ENCODE measurements at regions of chr12 and their contacts with region 1.

Region 1: DNA sequence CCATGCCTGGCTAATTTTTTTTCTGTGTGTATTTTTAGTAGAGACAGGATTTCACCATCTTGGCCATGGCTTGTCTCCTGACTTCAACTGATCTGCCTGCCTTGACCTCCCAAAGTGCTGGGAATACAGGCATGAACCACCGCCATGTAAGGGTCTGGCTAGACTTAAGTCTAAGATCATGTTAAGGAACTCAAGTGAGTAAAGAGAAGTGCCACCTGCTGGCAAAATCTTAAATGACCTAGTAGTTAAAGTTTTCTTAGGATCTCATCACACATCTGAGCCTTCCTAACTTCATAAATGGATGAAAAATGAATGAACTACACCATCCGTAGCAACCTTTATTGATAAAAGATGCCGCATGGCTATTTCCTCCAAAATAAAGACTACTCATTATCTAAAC is 1.7 kb upstream of the C12orf56 start:
- DNase-seq: no peak
- ATAC-seq: peak; percentile 40; the same call in 1 of the 3 replicates
- H3K4me3 ChIP-seq: no peak overlapping the region
- H3K27ac ChIP-seq: no peak overlapping the region
- H3K4me1 ChIP-seq: peaks cover 11% of the 10 kb centered on the region; the same call in 1 of the 2 replicates
- H3K27me3 ChIP-seq: peaks cover 0 to 18% of the 10 kb centered on the region in 2 experiments; a peak in 3 of 5 replicates
- CTCF ChIP-seq: peak; percentile 42; the same call in 1 of the 2 replicates
- EP300 ChIP-seq: no peak
- POLR2A ChIP-seq: no peak
- RAD21 ChIP-seq: no peak

Region 2: DNA sequence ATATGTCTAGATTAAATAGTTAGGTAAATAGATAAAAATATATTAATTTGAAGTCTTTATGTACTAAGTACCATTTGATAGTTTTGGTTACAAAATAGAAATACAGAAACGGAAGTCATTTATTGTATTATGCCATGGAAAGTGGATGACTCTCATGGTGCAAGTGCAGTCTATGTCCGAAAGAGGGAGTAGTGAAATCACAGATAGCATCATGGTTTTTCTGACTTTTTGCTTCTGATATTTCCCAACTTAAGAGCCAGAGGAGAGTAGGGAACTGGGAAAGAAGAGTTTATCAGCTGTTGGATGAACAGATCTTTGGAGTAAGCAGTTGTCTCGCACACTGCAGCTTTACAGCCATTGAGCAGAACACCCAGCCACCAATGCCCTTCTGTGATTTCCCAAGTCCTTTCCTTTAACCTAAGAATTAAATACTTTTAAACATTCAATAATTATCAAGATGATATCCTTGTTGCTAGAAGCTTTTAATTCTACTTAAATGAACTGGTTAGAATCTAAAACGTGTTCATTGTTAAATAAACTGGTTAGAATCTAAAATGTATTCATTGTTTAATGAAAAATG is 566.1 kb before region 1 on chr12:
- CTCF ChIA-PET with region 1: interaction called, 11 read pairs
- POLR2A ChIA-PET with region 1: no interaction called
- in situ Hi-C with region 1: loop called (anchors 5 kb)
- intact Hi-C with region 1: loop called (anchors 1 kb)
- DNase-seq: peak; percentile 56
- ATAC-seq: peak; percentile 79
- H3K4me3 ChIP-seq: no peak overlapping the region
- H3K27ac ChIP-seq: no peak overlapping the region
- H3K4me1 ChIP-seq: peaks cover 18% of the 10 kb centered on the region
- H3K27me3 ChIP-seq: no peaks in the 10 kb centered on the region
- CTCF ChIP-seq: peak; percentile 82
- EP300 ChIP-seq: no peak
- POLR2A ChIP-seq: no peak
- RAD21 ChIP-seq: peak; percentile 57; the same call in 1 of the 2 replicates

Region 3: GRCh38 chr12:64273527-64274403 is 118.5 kb before region 1 on chr12:
- CTCF ChIA-PET with region 1: no interaction called
- POLR2A ChIA-PET with region 1: no interaction called
- in situ Hi-C with region 1: loop called (anchors 10 kb)
- intact Hi-C with region 1: loop called (anchors 1 kb)
- DNase-seq: peak; percentile 6
- ATAC-seq: peak; percentile 91
- H3K4me3 ChIP-seq: no peak overlapping the region
- H3K27ac ChIP-seq: no peak overlapping the region
- H3K4me1 ChIP-seq: no peaks in the 10 kb centered on the region
- H3K27me3 ChIP-seq: peaks cover 0 to 5% of the 10 kb centered on the region in 2 experiments; a peak in 2 of 5 replicates
- CTCF ChIP-seq: peak; percentile 63
- EP300 ChIP-seq: no peak
- POLR2A ChIP-seq: no peak
- RAD21 ChIP-seq: peak; percentile 34; the same call in 1 of the 2 replicates

Region 4: DNA sequence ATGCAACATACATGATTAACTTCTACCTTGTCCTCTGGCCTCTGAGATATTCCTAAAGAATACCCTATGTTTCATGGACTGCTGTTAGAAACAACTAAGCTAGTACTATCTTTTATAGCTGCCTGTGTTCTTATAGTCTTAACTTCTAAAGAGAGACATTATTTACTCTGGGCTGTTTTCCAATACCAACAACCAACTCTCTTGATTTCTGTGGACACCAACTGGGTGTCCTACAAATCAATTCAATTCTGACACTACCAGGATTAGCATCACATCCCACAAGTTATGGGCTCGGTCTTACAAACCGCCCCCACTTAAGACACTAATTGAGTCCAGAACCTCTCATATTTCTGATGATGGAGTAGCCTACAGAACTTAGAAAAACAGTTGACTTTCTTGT is 20.2 kb after region 1 on chr12:
- CTCF ChIA-PET with region 1: no interaction called
- POLR2A ChIA-PET with region 1: no interaction called
- in situ Hi-C with region 1: no loop called
- intact Hi-C with region 1: no loop called
- DNase-seq: no peak
- ATAC-seq: no peak
- H3K4me3 ChIP-seq: no peak overlapping the region
- H3K27ac ChIP-seq: no peak overlapping the region
- H3K4me1 ChIP-seq: peaks cover 21% of the 10 kb centered on the region
- H3K27me3 ChIP-seq: no peaks in the 10 kb centered on the region
- CTCF ChIP-seq: no peak
- EP300 ChIP-seq: no peak
- POLR2A ChIP-seq: no peak
- RAD21 ChIP-seq: no peak

Measured in HepG2 (cell line).